Caco-2 (cell line): ENCODE measurements at regions of chr1 and their contacts with region 1.

Region 1: DNA sequence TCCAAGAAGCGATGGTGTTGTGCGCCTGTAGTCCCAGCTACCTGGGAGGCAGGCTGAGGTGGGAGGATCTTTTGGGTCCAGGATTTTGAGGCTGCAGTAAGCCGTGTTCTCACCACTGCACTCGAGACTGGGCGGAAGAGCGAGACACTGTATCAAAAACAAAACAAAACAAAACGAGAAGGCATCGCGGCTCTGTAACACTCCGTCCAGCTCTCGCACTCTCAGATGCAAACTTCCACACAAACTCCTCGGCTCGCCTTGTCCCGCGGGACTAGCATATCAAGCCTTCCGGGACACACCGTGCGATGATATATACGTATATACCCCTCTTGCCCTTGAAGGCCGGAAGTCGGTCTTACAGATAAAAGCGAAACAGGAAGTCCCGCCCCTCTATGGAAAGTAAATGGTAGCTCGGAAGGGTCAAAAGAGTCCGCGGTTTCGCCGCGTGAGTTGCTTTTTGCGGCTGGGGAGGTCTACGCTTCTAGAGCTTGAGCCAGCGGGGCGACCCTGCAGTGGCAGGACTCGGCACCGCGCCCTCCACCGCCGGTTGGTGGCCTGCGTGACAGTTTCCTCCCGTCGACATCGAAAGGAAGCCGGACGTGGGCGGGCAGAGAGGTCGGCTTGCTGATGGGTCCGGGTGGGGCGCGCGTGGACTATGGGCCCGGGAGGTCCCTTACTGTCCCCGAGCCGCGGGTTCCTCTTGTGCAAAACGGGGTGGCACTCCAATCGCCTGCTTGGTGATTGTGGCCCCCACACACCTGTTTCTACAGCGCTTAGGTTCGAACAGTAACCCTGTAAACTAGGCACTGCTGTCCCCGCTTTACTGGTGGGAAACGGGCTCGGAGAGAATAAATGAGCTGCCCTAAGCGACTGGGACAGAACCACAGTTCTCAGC is at the start of gene COA6:
- DNase-seq: peak; percentile 91 to 95
- H3K4me3 ChIP-seq: peak within 1 kb of the TSS; percentile 77
- H3K4me3 Mint-ChIP-seq: peak within 1 kb of the TSS; percentile 99
- H3K27ac Mint-ChIP-seq: peak within 1 kb of the TSS; percentile 97
- H3K4me1 ChIP-seq: 0 out of 2 replicates have a peak, but pooled peaks cover 4% of the 10 kb centered on the region
- H3K4me1 Mint-ChIP-seq: no peaks in the 10 kb centered on the region
- H3K27me3 ChIP-seq: no peaks in the 10 kb centered on the region
- H3K27me3 Mint-ChIP-seq: no peaks in the 10 kb centered on the region
- CTCF ChIP-seq: no peak
- total RNA-seq, gene COA6: 41.0 and 47.6 TPM in 2 replicates

Region 2: DNA sequence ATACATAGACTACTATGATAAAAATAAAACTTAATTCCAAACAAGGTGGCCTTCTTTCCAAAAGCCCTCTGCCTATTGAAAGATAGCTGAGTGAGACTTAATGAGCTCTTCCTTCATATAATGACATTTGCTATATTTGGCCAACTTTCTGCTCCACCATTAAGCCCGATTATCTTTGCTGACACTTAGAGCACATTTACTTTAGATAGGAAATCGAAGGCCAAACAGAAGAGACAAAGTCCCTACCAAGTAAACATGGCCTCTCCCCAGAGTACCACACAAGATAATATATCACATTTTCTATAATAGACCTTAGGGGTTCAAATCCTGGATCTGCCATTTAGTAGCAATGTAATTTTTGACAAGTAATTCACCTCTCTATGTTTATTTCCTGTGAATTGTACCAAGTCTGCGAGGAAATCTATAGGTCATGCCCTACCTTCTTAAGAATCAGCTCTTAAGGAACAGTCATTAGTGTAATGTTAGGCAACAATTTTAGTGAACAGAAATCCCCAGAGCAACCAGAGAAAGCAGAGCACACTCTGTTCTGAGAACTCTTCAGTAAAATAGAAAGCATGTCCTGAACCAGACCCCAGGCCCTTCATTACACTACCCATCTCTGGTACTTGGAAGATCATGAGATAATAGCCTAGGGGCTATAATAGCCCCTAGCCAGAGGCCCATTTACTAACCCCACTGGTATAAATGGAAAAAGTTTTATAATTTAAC is 17.4 kb before region 1 on chr1:
- CTCF ChIA-PET with region 1: no interaction called
- POLR2A ChIA-PET with region 1: interaction called, 15 read pairs
- intact Hi-C with region 1: loop called (anchors 2 kb)
- DNase-seq: no peak
- H3K4me3 ChIP-seq: peak overlapping the region; percentile 71; the same call in 1 of the 2 replicates
- H3K4me3 Mint-ChIP-seq: peak overlapping the region; percentile 77
- H3K27ac Mint-ChIP-seq: peak overlapping the region; percentile 50
- H3K4me1 ChIP-seq: peaks cover 3% of the 10 kb centered on the region; the same call in 1 of the 2 replicates
- H3K4me1 Mint-ChIP-seq: no peaks in the 10 kb centered on the region
- H3K27me3 ChIP-seq: no peaks in the 10 kb centered on the region
- H3K27me3 Mint-ChIP-seq: peaks cover 11% of the 10 kb centered on the region
- CTCF ChIP-seq: no peak

Region 3: DNA sequence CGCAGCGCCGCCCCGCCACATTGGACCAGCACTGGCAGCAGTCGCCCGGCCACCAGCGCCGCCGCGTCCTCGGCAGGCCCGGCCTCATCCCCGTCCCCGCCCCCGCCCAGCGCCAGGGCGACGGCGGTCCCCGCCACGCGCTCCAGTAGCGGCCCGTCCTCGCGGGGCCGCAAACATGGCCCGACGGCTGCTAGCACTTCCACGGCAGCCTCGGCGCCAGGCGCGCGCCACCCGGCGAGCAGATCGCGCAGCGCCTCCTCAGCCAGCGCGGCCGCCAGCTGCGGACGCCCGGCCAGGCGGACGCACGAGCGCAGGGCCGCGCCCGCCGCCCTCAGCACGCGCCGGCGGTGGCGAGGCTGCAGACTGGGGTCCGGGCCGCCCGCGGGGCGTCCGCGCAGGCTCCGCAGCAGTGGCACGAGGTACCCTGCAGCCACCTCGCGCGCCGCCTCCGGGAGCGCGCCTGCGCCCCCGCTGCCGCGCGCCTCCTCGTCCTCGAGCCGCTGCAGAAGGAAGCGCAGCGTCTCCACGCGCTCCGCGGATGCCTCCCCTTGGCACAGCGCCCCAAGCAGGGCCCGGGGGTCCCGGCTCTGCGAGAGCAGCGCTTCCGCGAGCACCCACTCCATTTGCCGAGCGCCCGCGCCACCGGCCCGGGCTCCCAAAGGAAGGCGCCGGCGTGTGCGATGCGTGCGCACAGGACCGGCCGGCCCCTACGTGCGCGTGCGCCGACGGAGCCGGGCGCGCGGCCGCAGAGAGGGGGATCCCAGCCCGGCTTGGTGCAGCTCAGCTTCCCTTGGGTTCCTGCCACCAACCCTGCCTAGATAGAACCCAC is 105.4 kb after region 1 on chr1 and contains the start of gene TARBP1:
- CTCF ChIA-PET with region 1: no interaction called
- POLR2A ChIA-PET with region 1: interaction called, 3 read pairs
- intact Hi-C with region 1: loop called (anchors 2 kb)
- DNase-seq: peak; percentile 65 to 85
- H3K4me3 ChIP-seq: peak within 1 kb of the TSS; percentile 91
- H3K4me3 Mint-ChIP-seq: peak within 1 kb of the TSS; percentile 76
- H3K27ac Mint-ChIP-seq: peak within 1 kb of the TSS; percentile 62
- H3K4me1 ChIP-seq: no peaks in the 10 kb centered on the region
- H3K4me1 Mint-ChIP-seq: peaks cover 8% of the 10 kb centered on the region
- H3K27me3 ChIP-seq: no peaks in the 10 kb centered on the region
- H3K27me3 Mint-ChIP-seq: peaks cover 6% of the 10 kb centered on the region
- CTCF ChIP-seq: peak; percentile 6 to 7
- total RNA-seq, gene TARBP1: 33.8 and 37.0 TPM in 2 replicates

Region 4: GRCh38 chr1:234564642-234565037 is 191.3 kb after region 1 on chr1:
- CTCF ChIA-PET with region 1: no interaction called
- POLR2A ChIA-PET with region 1: no interaction called
- intact Hi-C with region 1: no loop called
- DNase-seq: peak; percentile 49
- H3K4me3 ChIP-seq: no peak overlapping the region
- H3K4me3 Mint-ChIP-seq: no peak overlapping the region
- H3K27ac Mint-ChIP-seq: peak overlapping the region; percentile 15
- H3K4me1 ChIP-seq: peaks cover 42% of the 10 kb centered on the region
- H3K4me1 Mint-ChIP-seq: peaks cover 24% of the 10 kb centered on the region
- H3K27me3 ChIP-seq: no peaks in the 10 kb centered on the region
- H3K27me3 Mint-ChIP-seq: no peaks in the 10 kb centered on the region
- CTCF ChIP-seq: no peak